ENCODE measurements at regions of chr6 and their contacts with region 1.

Region 1: GRCh38 chr6:117072134-117072533 is 193.2 kb upstream of the VGLL2 start:
- DNase-seq: peak; percentile 68
- ATAC-seq: peak; percentile 76

Region 2: GRCh38 chr6:117034971-117035370 is 37.2 kb before region 1 on chr6:
- intact Hi-C with region 1: no loop called
- DNase-seq: no peak
- ATAC-seq: no peak

Region 3: DNA sequence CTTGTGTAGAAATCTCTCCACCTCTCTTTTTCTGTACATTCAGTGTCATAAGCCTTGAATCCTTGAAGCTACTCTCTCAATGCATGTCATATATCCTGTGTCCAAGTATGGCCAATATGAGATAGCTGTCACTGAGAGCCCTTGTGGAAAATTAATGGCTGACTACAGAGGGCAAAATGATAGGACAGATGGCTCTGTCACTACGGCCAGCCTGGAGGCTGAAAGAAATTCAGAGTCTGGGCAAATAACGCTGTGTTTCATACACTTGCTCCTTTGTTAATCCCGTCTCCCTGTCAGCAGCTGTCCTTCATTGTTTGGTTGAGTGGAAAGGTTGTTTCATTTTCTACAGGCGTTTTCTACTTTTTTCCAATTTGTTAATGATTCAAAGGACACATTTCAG is 122.8 kb after region 1 on chr6:
- intact Hi-C with region 1: loop called (anchors 10 kb)
- DNase-seq: no peak
- ATAC-seq: no peak

Region 4: GRCh38 chr6:117298941-117299340 is 226.8 kb after region 1 on chr6:
- intact Hi-C with region 1: no loop called
- DNase-seq: no peak
- ATAC-seq: no peak